Activated naive CD4-positive, alpha-beta T cell treated with anti-CD3 and anti-CD28 coated beads, Interleukin-2, amount 10 ng/mL, durations not matched to agents 7 days and 5 days (primary cell): ENCODE measurements at regions of chr11 and their contacts with region 1.

Region 1: DNA sequence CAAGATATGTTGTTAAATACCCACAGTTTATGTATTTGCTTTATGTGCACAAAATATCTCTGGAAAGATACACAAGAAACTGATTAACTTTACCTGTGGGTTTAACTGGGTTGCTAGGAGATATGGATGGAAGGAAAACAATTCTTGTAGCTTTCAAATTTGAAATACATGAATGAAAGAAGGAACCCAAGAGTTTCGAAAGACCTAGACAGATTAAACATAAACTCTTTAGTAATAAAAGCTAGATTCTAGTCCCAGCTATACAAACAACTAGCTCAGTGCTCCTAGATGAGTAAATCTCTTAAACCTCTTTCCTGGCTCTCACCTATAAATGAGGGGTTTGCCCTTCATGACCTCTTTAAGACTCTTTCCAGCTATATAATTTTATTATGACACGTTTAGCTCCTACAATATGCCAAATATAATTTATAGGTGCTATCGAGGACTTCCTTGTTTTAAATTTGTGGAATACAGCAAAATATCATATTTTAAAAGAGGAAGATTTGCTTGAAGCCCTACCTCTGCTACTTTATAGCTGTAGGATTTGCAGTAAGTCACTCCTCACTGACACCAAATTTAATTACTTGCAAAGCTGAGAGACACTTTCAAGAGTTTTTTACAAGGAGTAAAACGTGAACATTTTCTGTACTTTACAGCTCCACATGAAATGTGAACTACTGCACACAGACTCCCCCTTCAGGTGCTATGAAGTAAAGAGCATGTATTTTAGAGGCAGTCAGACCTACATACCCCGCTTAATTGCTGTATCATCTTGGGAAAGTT is 50.7 kb downstream of the RRAS2 start:
- DNase-seq: no peak
- H3K4me3 Mint-ChIP-seq: no peak overlapping the region
- H3K27ac Mint-ChIP-seq: no peak overlapping the region
- H3K4me1 Mint-ChIP-seq: peaks cover 26% of the 10 kb centered on the region
- H3K27me3 Mint-ChIP-seq: no peaks in the 10 kb centered on the region

Region 2: DNA sequence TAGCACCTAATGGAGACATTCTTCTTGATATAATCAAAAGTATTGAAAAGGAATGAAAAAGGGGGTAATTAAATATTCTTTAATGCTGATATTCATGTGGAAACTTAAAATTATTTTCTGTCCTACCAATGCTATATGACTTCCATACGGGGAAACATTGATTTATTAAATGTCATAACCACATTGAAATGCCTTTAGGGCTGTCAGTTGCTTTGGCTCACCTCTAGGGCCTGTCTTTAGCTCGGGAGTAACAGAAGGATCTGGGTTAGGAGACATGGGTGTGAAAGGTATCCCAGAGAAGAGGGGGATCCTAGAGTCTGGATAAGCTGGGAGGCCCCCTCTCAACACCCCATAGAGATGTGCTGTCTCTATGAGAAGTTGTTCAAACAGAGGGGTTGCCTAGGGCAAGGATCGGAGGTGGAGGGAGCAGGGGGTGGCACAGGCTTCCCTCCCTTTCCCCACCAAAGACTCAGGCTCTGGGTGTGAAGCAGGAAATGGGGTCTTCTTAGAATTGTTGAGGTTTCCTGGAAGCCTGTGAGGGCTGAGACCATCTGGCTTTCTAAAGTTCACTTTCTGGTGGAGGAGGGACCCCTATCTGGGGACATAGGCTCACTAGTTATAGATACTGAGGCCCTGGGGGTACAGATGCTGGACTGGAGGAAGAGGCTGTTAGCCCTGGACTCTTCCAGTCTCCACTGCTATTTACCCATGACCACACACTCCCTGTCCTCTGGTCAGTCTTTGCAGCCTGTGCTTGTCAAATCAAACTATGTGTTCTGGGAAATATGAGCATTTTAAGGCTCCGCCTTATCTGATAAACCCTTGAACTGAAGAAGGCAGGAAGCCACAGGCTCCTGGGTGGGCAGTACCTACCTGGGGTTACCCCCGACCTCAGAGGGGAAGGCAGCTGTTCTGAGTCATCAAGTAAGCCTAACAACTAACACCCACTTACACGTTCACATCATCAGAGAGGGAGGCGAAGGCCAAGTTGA is 106.5 kb after region 1 on chr11:
- CTCF ChIA-PET with region 1: interaction called, 70 read pairs
- DNase-seq: peak; percentile 84
- H3K4me3 Mint-ChIP-seq: peak overlapping the region; percentile 65
- H3K27ac Mint-ChIP-seq: peak overlapping the region; percentile 84
- H3K4me1 Mint-ChIP-seq: peaks cover 78% of the 10 kb centered on the region
- H3K27me3 Mint-ChIP-seq: no peaks in the 10 kb centered on the region

Region 3: GRCh38 chr11:14454861-14455632 is 146.7 kb after region 1 on chr11:
- CTCF ChIA-PET with region 1: interaction called, 109 read pairs
- DNase-seq: no peak
- H3K4me3 Mint-ChIP-seq: no peak overlapping the region
- H3K27ac Mint-ChIP-seq: no peak overlapping the region
- H3K4me1 Mint-ChIP-seq: peaks cover 2% of the 10 kb centered on the region
- H3K27me3 Mint-ChIP-seq: no peaks in the 10 kb centered on the region